IMR-90 (cell line): ENCODE measurements at regions of chr3 and their contacts with region 1.

Region 1: GRCh38 chr3:82240322-82240721 is 478.9 kb upstream of the GBE1 start:
- DNase-seq: no peak
- ATAC-seq: no peak
- H3K4me3 ChIP-seq: no peak overlapping the region
- H3K27ac ChIP-seq: no peak overlapping the region
- H3K4me1 ChIP-seq: no peaks in the 10 kb centered on the region
- H3K27me3 ChIP-seq: no peaks in the 10 kb centered on the region
- CTCF ChIP-seq: no peak
- POLR2A ChIP-seq: no peak
- RAD21 ChIP-seq: no peak

Region 2: DNA sequence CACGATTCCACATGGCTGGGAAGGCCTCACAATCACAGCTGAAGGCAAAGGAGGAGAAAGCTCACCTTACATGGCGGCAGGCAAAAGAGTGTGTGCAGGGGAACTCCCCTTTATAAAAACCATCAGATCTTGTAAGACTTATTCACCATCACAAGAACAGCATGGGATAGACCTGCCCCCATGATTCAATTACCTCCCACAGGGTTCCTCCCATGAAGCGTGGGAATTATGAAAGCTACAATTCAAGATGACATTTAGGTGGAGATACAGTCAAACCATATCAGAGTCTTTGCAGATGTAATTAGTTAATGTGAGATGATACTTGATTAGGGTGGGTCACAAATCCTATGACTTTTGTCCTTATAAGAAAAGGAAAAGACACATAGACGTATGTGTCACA is 1167.7 kb before region 1 on chr3:
- CTCF ChIA-PET with region 1: no interaction called
- POLR2A ChIA-PET with region 1: no interaction called
- dilution Hi-C with region 1: no loop called
- in situ Hi-C with region 1: no loop called
- intact Hi-C with region 1: no loop called
- DNase-seq: no peak
- ATAC-seq: no peak
- H3K4me3 ChIP-seq: no peak overlapping the region
- H3K27ac ChIP-seq: no peak overlapping the region
- H3K4me1 ChIP-seq: no peaks in the 10 kb centered on the region
- H3K27me3 ChIP-seq: no peaks in the 10 kb centered on the region
- CTCF ChIP-seq: no peak
- POLR2A ChIP-seq: no peak
- RAD21 ChIP-seq: no peak

Region 3: DNA sequence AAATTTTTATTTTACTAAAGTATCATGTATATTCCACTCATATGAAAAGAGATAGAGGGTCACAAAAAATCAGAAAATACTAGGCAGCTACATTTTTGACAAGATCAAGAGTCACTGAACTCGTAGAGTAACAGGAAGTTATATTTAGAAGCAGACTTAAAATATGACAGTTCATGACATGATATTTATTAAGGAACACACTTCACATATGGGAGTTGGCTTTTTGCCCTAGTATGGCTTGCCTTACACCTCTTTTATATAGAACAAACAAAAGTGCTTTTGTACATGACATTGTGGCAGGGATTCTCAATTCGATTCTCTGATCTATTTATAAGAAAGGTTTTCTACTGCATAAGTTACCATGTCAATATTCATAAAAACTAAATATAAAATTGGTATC is 398.8 kb before region 1 on chr3:
- CTCF ChIA-PET with region 1: no interaction called
- POLR2A ChIA-PET with region 1: interaction called, 11 read pairs
- dilution Hi-C with region 1: no loop called
- in situ Hi-C with region 1: no loop called
- intact Hi-C with region 1: no loop called
- DNase-seq: no peak
- ATAC-seq: no peak
- H3K4me3 ChIP-seq: no peak overlapping the region
- H3K27ac ChIP-seq: no peak overlapping the region
- H3K4me1 ChIP-seq: no peaks in the 10 kb centered on the region
- H3K27me3 ChIP-seq: no peaks in the 10 kb centered on the region
- CTCF ChIP-seq: no peak
- POLR2A ChIP-seq: no peak
- RAD21 ChIP-seq: no peak

Region 4: DNA sequence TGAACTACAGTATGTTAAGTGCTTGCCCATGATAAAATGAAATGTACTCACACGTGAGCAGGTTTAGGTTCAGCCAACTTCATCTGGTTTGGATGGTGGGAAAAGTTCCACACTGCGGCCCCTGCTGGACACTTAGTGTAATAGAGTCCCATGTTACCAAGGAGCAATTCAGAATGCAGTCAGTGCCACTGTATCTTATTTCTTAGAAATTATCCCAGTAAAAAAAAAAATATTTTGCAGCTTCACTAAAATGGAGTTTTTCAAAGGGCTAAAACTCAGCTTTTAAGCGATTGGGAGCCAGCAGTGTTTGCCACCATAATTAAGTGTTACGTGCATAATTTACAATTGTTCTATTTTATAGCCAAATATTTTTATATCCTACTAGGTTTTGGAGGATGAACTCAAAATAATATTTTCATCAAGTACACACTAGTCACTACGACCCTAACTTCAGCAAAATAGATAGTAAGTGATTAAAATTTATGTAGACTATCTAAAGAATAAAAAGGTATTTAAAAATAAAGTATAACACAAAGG is 107.2 kb before region 1 on chr3:
- CTCF ChIA-PET with region 1: no interaction called
- POLR2A ChIA-PET with region 1: no interaction called
- dilution Hi-C with region 1: no loop called
- in situ Hi-C with region 1: no loop called
- intact Hi-C with region 1: no loop called
- DNase-seq: peak; percentile 63
- ATAC-seq: peak; percentile 94
- H3K4me3 ChIP-seq: no peak overlapping the region
- H3K27ac ChIP-seq: no peak overlapping the region
- H3K4me1 ChIP-seq: no peaks in the 10 kb centered on the region
- H3K27me3 ChIP-seq: no peaks in the 10 kb centered on the region
- CTCF ChIP-seq: peak; percentile 68
- POLR2A ChIP-seq: no peak
- RAD21 ChIP-seq: peak; percentile 64

Region 5: DNA sequence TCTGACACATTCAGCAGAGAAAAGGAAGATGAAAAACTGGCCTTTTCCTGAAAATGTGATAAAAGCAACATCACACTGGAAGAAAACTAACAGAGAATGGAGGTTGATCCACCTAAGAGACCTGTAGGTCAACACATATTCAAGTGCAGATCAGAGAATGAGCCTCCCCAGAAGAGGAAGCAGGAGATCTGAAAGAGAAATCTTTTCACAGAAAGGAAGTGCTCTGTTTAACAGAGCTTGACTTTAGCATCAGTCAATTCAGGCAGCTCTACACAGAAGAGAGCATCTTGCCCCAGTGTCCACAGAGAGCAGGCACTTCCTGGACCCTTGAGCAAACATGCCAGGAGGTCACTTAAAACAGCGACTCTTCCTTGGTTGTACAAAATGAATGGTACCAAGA is 176.5 kb after region 1 on chr3:
- CTCF ChIA-PET with region 1: no interaction called
- POLR2A ChIA-PET with region 1: no interaction called
- dilution Hi-C with region 1: no loop called
- in situ Hi-C with region 1: no loop called
- intact Hi-C with region 1: no loop called
- DNase-seq: no peak
- ATAC-seq: no peak
- H3K4me3 ChIP-seq: no peak overlapping the region
- H3K27ac ChIP-seq: no peak overlapping the region
- H3K4me1 ChIP-seq: no peaks in the 10 kb centered on the region
- H3K27me3 ChIP-seq: no peaks in the 10 kb centered on the region
- CTCF ChIP-seq: no peak
- POLR2A ChIP-seq: no peak
- RAD21 ChIP-seq: no peak